Tibial artery (tissue), 4 donors: ENCODE measurements at regions of chr15 and their contacts with region 1.

Region 1: GRCh38 chr15:93129702-93130488 is 40.9 kb upstream of the RGMA start:
- DNase-seq: no peak
- H3K4me3 ChIP-seq: no peak overlapping the region
- H3K27ac ChIP-seq: no peak overlapping the region
- H3K4me1 ChIP-seq: peaks cover 0 to 8% (median 0%) of the 10 kb centered on the region in 4 donors
- H3K27me3 ChIP-seq: no peaks in the 10 kb centered on the region
- CTCF ChIP-seq: no peak

Region 2: DNA sequence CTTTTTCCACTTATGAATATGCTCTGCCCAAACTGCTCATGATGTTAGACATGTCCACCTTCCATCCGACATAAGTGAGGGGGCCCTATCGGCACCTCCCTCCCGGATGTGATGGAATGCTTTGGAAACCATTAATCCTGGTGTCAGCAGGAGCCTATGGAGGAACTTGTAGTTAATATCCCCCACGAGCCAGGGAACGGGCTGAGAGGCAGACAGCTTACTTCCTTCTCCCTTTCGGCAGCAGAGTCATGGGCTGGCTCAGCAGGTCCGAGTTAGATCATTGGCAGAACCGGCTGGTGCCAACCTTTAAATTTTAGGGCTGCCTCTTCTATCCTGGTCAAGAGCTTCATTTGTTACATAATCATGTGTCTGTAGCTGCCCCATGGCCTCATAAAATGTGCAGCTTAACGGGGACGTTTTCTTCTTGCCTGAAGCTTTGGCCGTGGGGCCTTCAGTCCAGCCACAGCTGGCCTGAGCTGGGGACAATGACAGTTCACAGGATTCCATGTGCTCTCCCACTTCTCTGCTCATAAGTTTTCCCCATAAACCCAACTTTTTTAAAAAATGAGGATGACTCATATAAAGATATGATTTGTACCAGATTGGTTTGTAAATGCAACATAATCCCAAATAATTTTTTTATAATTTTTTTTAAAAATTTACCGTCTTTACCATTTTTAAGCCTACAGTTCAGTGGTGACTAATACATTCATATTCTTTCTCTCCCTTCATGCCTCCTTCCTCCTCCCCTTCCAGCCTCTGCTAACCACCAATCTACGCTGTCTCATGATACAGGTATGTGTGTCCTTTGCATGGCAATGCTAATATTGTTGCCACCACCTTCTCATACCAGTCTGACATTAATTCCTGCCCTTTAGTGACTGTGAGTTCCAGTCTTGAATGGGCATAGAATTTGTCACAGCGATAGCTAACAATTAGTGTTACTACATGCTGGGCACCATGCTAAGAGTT is 21.3 kb after region 1 on chr15:
- intact Hi-C with region 1: loop called (anchors 2 kb)
- DNase-seq: peak in 1 of 2 donors; percentile 57
- H3K4me3 ChIP-seq: no peak overlapping the region
- H3K27ac ChIP-seq: peak overlapping the region in 1 of 2 donors; percentile 0
- H3K4me1 ChIP-seq: peaks cover 0 to 36% (median 16%) of the 10 kb centered on the region in 4 donors
- H3K27me3 ChIP-seq: no peaks in the 10 kb centered on the region
- CTCF ChIP-seq: no peak